ENCODE measurements at regions of chr5 and their contacts with region 1.

Region 1: DNA sequence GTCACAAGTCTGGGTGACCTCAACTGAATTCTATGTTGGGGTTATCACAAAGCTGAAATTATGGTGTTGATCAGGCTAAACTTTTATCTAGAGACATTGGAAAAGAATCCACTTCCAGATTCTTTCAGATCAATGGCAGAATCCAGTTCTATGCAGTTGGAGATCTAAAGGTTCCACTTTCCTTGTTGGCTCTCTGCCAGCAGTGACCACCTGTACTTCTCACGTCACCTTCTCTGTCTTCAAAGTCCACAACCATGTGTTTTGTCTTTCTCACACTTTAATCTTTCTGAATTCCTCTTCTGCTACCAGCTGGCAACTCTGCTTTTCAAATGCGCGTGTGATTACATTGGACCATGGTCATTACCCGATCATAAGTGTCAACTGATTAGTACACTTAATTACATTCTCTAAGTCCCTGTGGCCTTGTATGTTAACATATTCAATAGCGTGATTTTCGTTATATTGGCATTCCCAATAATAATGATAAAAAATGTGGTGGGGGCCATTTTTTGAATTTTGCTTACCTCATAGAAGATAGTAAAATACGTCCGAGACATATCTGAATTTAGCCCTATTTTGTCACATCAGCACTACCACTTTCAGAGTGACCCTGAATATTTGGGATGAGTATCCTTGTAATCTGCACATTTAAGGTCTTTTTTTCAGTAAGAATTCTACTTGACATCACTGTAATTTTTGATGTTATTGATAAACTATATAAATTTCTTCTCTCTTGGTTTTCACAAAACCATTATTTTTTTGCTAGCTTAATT is 73.7 kb upstream of the PRDM9 start:
- DNase-seq: no peak

Region 2: DNA sequence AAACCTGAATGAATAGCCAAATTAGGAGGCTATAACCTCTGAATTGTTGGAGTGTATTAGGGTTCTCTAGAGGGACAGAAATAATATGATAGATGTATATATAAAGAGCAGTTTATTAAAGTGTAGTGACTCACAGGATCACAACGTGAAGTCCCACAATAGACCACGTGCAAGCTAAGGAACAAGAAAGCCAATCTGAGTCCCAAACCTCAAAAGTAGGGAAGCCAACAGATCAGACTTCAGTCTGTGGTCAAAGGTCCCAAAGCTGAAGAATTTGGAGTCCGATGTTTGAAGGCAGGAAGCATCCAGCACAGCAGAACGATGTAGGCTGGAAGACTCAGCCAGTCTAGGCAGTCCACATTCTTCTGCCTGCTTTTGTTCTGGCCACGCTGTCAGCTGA is 660.4 kb after region 1 on chr5:
- intact Hi-C with region 1: loop called in 1 of 2 experiments (anchors 5 kb)
- DNase-seq: no peak